ENCODE measurements at regions of chr14 and their contacts with region 1.

Region 1: GRCh38 chr14:74084277-74085046 is at the starts of genes ALDH6A1 and LIN52:
- DNase-seq: peak; percentile 99
- ATAC-seq: peak; percentile 93
- H3K4me3 Mint-ChIP-seq: peak within 1 kb of the TSS; percentile 95
- H3K27ac Mint-ChIP-seq: peak within 1 kb of the TSS; percentile 95
- H3K4me1 Mint-ChIP-seq: peaks cover 31% of the 10 kb centered on the region
- H3K27me3 Mint-ChIP-seq: no peaks in the 10 kb centered on the region
- total RNA-seq, gene ALDH6A1: 17.2 to 24.6 TPM
- total RNA-seq, gene LIN52: 10.3 to 13.2 TPM

Region 2: GRCh38 chr14:73491256-73492042 is 593.0 kb before region 1 on chr14:
- CTCF ChIA-PET with region 1: no interaction called
- POLR2A ChIA-PET with region 1: no interaction called
- intact Hi-C with region 1: loop called in 1 of 2 experiments (anchors 1 kb)
- DNase-seq: peak; percentile 84
- ATAC-seq: peak; percentile 79
- H3K4me3 Mint-ChIP-seq: peak overlapping the region; percentile 81
- H3K27ac Mint-ChIP-seq: peak overlapping the region; percentile 75
- H3K4me1 Mint-ChIP-seq: peaks cover 40% of the 10 kb centered on the region
- H3K27me3 Mint-ChIP-seq: peaks cover 2% of the 10 kb centered on the region

Region 3: GRCh38 chr14:73741386-73741875 is 343.0 kb before region 1 on chr14:
- CTCF ChIA-PET with region 1: no interaction called
- POLR2A ChIA-PET with region 1: no interaction called
- intact Hi-C with region 1: loop called in 1 of 2 experiments (anchors 10 kb)
- DNase-seq: peak; percentile 85
- ATAC-seq: peak; percentile 80
- H3K4me3 Mint-ChIP-seq: peak overlapping the region; percentile 66
- H3K27ac Mint-ChIP-seq: peak overlapping the region; percentile 82
- H3K4me1 Mint-ChIP-seq: peaks cover 65% of the 10 kb centered on the region
- H3K27me3 Mint-ChIP-seq: no peaks in the 10 kb centered on the region

Region 4: DNA sequence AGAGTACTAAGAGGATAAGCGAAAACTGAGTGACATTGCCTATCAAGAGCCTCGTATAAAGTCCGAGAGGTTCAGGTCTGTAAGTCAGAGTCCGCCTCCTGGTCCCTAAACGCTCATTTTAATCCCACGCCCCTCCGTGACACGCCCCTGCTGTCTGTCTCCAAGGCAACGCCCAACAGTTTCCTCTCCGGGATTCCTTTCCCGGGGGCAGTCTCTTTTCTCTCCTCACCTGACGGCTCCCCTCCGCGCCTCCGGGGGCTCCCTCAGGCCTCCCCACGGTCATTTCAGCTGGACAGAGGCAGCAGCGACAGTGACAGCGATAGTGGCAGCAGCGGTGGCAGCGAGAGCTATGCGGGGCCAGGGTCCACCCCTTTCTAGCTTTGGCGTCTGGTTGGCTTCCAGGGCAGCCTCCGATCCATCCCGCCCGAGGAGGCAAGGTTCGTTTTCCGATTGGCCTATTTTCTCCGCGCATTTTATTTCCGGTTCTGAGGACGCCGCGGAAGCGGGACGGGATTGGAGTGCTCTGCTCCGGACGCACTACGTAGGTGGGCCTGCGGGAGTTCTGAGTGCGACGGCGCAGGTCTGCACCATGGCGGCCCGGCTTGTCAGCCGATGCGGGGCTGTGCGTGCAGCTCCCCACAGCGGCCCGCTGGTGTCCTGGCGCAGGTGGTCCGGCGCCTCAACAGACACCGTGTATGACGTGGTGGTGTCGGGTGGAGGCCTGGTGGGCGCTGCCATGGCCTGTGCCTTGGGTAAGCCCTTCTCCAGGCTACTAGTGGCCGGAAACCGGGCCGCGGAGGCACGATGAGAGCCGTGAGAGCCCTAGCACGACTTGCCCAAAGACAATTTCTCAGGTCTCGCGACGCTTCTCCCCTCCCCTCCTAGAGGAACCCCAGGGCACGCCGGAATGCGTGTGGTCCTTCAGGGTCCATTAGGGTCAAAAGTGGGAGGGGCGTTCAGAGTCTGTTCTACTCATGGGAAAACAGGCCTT is 134.4 kb before region 1 on chr14 and contains the starts of genes COQ6 and FAM161B:
- CTCF ChIA-PET with region 1: no interaction called
- POLR2A ChIA-PET with region 1: no interaction called
- intact Hi-C with region 1: loop called (anchors 1 kb)
- DNase-seq: peak; percentile 95
- ATAC-seq: peak; percentile 96
- H3K4me3 Mint-ChIP-seq: peak within 1 kb of the TSS; percentile 91
- H3K27ac Mint-ChIP-seq: peak within 1 kb of the TSS; percentile 88
- H3K4me1 Mint-ChIP-seq: peaks cover 14% of the 10 kb centered on the region
- H3K27me3 Mint-ChIP-seq: no peaks in the 10 kb centered on the region
- total RNA-seq, gene COQ6: 14.1 to 17.0 TPM
- total RNA-seq, gene FAM161B: 1.2 to 1.4 TPM

Region 5: DNA sequence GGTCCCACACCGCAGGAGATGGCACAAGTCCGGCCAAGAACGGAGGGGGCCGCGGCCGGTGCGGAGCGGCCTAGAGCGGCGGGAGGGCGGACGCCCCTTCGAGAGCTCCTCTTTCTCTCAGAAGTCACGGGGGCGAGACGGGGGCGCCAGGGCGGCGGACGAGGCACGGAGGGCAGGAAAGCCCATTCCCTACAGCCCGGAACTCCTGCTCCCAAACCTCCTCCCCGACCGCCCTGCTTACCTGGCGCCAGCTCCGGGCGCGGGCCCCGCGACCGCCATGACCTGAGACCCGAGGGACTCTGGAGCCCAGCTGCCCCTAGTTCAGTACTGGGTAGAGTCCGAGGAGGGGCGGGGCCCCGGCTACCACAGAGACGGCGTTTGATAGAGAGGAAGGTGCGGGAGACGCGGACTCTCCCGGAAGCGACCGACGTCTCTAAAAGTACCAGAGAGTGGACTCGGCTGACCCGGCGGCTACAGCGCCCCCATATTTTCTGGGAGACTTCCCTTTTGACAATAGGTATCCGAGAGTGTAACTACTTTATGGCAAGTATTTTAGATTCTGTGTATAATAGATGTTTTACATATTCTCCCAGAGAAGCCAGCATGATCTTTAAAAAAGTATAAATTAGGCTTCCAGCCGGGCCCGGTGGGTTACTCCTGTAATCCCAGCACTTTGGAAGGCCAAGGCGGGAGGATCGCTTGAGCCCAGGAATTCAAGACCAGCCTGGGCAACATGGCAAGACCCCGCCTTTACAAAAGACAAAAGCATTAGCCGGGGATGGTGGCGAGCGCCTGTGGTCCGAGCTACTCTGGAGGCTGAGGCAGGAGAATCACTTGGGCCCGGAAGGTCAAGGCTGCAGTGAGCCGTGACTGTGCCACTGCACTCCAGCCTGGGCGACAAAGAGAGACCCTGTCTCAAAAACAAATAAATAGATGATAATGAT is 218.4 kb after region 1 on chr14 and contains the start of gene ABCD4:
- CTCF ChIA-PET with region 1: interaction called, 3 read pairs
- POLR2A ChIA-PET with region 1: no interaction called
- intact Hi-C with region 1: loop called in 1 of 2 experiments (anchors 1 kb)
- DNase-seq: peak; percentile 91
- ATAC-seq: peak; percentile 95
- H3K4me3 Mint-ChIP-seq: peak within 1 kb of the TSS; percentile 98
- H3K27ac Mint-ChIP-seq: peak within 1 kb of the TSS; percentile 98
- H3K4me1 Mint-ChIP-seq: peaks cover 32% of the 10 kb centered on the region
- H3K27me3 Mint-ChIP-seq: no peaks in the 10 kb centered on the region
- total RNA-seq, gene ABCD4: 43.0 to 43.1 TPM

Region 6: GRCh38 chr14:75002392-75003249 is 918.2 kb after region 1 on chr14 and contains the start of gene EIF2B2:
- CTCF ChIA-PET with region 1: no interaction called
- POLR2A ChIA-PET with region 1: no interaction called
- intact Hi-C with region 1: loop called in 1 of 2 experiments (anchors 2 kb)
- DNase-seq: peak; percentile 99
- ATAC-seq: peak; percentile 97
- H3K4me3 Mint-ChIP-seq: peak within 1 kb of the TSS; percentile 87
- H3K27ac Mint-ChIP-seq: peak within 1 kb of the TSS; percentile 88
- H3K4me1 Mint-ChIP-seq: peaks cover 34% of the 10 kb centered on the region
- H3K27me3 Mint-ChIP-seq: no peaks in the 10 kb centered on the region
- total RNA-seq, gene EIF2B2: 55.6 to 69.8 TPM